Natural killer cell (primary cell): ENCODE measurements at regions of chr19 and their contacts with region 1.

Region 1: DNA sequence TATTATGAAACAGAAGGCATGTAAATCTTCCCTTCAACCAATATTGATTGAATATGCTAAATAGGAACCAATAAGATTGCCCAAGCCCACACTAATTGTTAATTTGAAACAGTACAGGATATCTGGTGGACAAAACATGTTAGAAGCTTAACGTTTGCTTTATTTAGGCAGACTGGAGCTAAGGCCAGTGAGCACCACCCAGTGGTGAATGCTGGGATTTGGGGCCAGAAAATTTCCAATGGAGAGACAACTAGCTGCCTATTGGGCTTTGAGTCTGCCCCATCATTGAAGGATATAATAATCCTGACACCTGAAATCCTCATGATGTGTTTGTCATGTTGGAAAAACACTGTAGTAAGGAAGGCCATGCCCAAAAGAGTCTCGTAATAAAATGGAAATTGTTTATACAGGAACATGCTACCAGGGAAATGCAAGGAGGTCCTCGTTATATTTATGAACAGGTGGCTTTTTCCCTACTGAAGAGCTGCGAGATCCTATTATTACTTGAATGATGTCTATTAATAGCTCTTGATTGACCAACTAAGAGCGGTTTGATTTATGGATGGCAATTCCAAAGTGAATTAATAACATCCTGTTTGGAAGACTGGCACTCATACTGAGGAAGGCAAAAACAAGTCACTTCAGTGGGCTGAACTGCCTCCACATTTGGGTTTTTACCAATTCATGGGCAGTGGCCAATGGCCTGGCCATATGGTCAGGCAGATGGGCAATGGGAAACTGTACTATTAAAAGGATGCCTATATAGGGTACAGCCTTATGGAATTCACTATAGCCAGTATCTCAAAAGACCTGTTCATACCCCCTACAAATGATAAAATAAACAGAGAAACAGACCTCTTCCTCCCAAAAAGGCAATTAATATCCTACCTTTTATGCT is 8.7 kb downstream of the SIGLECL1 start:
- DNase-seq: peak; percentile 32 to 49
- ATAC-seq: peak; percentile 65 to 81 (median 72)
- H3K4me3 ChIP-seq: no peak overlapping the region
- H3K4me3 Mint-ChIP-seq: no peak overlapping the region
- H3K27ac ChIP-seq: no peak overlapping the region
- H3K27ac Mint-ChIP-seq: no peak overlapping the region
- H3K4me1 ChIP-seq: no peaks in the 10 kb centered on the region
- H3K4me1 Mint-ChIP-seq: peaks cover 0 to 13% of the 10 kb centered on the region in 2 donors
- H3K27me3 ChIP-seq: no peaks in the 10 kb centered on the region
- H3K27me3 Mint-ChIP-seq: peaks cover 4 to 5% of the 10 kb centered on the region in 2 donors
- CTCF ChIP-seq: peak; percentile 63

Region 2: DNA sequence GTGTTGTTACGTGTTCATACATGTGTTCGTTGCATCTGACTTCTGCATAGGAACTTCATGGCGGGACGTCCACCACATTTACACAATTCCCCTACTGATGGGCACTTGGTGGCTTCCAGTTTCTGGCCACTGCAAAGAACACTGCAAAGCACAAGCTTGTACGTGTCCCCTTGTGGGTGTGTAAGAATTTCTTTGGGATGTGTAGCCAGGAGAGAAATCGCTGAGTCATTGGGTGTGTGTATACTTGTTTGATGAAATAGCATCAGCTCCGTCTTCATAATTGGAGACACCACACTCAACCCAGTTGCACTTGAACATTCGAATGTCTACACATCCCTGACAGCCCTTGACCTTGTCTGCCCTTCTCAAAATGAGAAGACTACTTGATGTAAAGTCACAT is 326.0 kb before region 1 on chr19:
- intact Hi-C with region 1: loop called (anchors 5 kb)
- DNase-seq: no peak
- ATAC-seq: no peak
- H3K4me3 ChIP-seq: no peak overlapping the region
- H3K4me3 Mint-ChIP-seq: no peak overlapping the region
- H3K27ac ChIP-seq: no peak overlapping the region
- H3K27ac Mint-ChIP-seq: no peak overlapping the region
- H3K4me1 ChIP-seq: no peaks in the 10 kb centered on the region
- H3K4me1 Mint-ChIP-seq: peaks cover 0 to 4% of the 10 kb centered on the region in 2 donors
- H3K27me3 ChIP-seq: no peaks in the 10 kb centered on the region
- H3K27me3 Mint-ChIP-seq: peaks cover 22 to 25% of the 10 kb centered on the region in 2 donors
- CTCF ChIP-seq: no peak

Region 3: DNA sequence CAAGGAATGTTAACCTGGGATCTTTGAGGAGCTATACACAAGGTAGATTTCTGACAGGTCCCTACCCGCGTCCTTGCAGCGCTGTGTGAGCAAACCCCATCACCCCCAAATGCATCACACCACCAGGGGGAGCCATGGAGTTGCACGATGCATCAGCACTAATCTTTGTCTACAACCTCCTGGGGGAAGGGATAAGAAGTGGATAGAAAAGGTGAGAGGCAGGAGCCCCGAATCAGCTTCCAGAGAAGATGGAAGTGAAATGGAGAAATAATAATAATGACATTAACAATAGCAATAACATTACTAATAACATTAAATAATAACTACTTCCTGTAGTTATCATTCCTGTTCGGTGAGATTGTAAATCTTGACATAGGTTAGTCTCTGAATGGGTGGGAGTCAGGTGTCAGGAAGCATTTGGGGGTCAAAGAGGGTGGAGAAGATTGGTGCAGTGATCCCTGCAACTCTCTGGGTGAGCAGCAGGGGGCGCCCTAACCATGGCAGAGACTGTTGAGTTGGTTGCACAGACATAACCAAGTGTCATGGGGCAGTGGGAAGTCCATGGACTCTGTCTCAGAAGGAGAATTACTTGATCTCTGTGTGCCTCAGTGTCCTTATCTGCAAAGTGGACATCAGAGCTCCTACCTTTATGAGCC is 101.0 kb before region 1 on chr19:
- intact Hi-C with region 1: loop called (anchors 1 kb)
- DNase-seq: peak; percentile 78 to 83
- ATAC-seq: peak; percentile 87 to 91 (median 87)
- H3K4me3 ChIP-seq: no peak overlapping the region
- H3K4me3 Mint-ChIP-seq: peak overlapping the region; percentile 43
- H3K27ac ChIP-seq: no peak overlapping the region
- H3K27ac Mint-ChIP-seq: peak overlapping the region; percentile 47 to 48
- H3K4me1 ChIP-seq: peaks cover 10% of the 10 kb centered on the region
- H3K4me1 Mint-ChIP-seq: peaks cover 39 to 50% of the 10 kb centered on the region in 2 donors
- H3K27me3 ChIP-seq: no peaks in the 10 kb centered on the region
- H3K27me3 Mint-ChIP-seq: no peaks in the 10 kb centered on the region
- CTCF ChIP-seq: peak; percentile 99

Region 4: GRCh38 chr19:51203916-51204315 is 55.7 kb before region 1 on chr19:
- intact Hi-C with region 1: no loop called
- DNase-seq: no peak
- ATAC-seq: no peak
- H3K4me3 ChIP-seq: no peak overlapping the region
- H3K4me3 Mint-ChIP-seq: no peak overlapping the region
- H3K27ac ChIP-seq: no peak overlapping the region
- H3K27ac Mint-ChIP-seq: no peak overlapping the region
- H3K4me1 ChIP-seq: peaks cover 2% of the 10 kb centered on the region
- H3K4me1 Mint-ChIP-seq: no peaks in the 10 kb centered on the region
- H3K27me3 ChIP-seq: peaks cover 2% of the 10 kb centered on the region
- H3K27me3 Mint-ChIP-seq: peaks cover 13 to 16% of the 10 kb centered on the region in 2 donors
- CTCF ChIP-seq: no peak

Region 5: DNA sequence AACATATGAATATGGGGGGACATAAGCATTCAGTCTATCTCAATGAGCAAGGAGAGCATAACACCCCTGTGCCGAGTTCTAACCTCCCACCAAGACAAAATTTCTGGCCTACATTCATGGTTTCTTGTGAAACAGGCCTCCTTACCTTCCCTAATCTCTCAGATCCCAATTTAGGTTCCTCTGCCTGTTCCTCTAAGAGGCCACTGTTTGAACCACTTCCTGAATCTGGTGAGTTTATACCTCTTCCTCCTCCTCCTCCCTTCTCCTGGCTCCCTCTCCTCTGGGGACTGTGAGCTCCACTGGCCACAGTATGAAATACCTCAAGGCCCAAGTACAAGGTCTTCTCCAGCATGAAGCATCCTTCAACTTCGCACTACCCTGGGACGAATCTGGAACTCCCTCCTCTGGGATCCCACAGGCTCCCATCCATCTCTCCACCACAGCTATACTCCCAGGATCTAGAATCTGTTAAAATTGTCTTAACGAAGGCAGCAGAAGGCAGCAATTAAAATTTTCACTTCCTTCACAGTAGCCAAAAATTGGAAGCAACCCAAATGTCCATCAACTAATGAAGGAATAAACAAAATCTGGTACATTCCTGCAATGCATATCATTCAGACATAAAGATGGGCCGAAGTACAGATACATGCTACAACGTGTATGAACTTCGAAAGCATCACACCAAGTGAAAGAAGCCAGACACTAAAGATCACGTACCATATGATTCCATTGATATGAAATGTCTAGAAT is 16.5 kb before region 1 on chr19:
- intact Hi-C with region 1: no loop called
- DNase-seq: no peak
- ATAC-seq: no peak
- H3K4me3 ChIP-seq: no peak overlapping the region
- H3K4me3 Mint-ChIP-seq: no peak overlapping the region
- H3K27ac ChIP-seq: no peak overlapping the region
- H3K27ac Mint-ChIP-seq: no peak overlapping the region
- H3K4me1 ChIP-seq: peaks cover 22% of the 10 kb centered on the region
- H3K4me1 Mint-ChIP-seq: peaks cover 35 to 36% of the 10 kb centered on the region in 2 donors
- H3K27me3 ChIP-seq: no peaks in the 10 kb centered on the region
- H3K27me3 Mint-ChIP-seq: peaks cover 5 to 10% of the 10 kb centered on the region in 2 donors
- CTCF ChIP-seq: no peak